ENCODE measurements at regions of chr14 and their contacts with region 1.

Region 1: GRCh38 chr14:22319526-22320361 is 269.3 kb downstream of the DAD1 start:
- DNase-seq: peak; percentile 63
- H3K4me3 ChIP-seq: no peak overlapping the region
- H3K27ac ChIP-seq: no peak overlapping the region
- H3K4me1 ChIP-seq: no peaks in the 10 kb centered on the region
- H3K27me3 ChIP-seq: no peaks in the 10 kb centered on the region
- CTCF ChIP-seq: peak; percentile 58 to 73 (median 64)
- POLR2A ChIP-seq: no peak

Region 2: GRCh38 chr14:21269252-21270046 is 1050.3 kb before region 1 on chr14 and contains the start of gene HNRNPC:
- intact Hi-C with region 1: no loop called
- DNase-seq: peak; percentile 100
- H3K4me3 ChIP-seq: peak within 1 kb of the TSS; percentile 83 to 95
- H3K27ac ChIP-seq: peak within 1 kb of the TSS; percentile 95 to 99
- H3K4me1 ChIP-seq: peaks cover 6% of the 10 kb centered on the region
- H3K27me3 ChIP-seq: no peaks in the 10 kb centered on the region
- CTCF ChIP-seq: no peak
- POLR2A ChIP-seq: peak; percentile 95
- total RNA-seq, gene HNRNPC: 411 to 423 TPM

Region 3: DNA sequence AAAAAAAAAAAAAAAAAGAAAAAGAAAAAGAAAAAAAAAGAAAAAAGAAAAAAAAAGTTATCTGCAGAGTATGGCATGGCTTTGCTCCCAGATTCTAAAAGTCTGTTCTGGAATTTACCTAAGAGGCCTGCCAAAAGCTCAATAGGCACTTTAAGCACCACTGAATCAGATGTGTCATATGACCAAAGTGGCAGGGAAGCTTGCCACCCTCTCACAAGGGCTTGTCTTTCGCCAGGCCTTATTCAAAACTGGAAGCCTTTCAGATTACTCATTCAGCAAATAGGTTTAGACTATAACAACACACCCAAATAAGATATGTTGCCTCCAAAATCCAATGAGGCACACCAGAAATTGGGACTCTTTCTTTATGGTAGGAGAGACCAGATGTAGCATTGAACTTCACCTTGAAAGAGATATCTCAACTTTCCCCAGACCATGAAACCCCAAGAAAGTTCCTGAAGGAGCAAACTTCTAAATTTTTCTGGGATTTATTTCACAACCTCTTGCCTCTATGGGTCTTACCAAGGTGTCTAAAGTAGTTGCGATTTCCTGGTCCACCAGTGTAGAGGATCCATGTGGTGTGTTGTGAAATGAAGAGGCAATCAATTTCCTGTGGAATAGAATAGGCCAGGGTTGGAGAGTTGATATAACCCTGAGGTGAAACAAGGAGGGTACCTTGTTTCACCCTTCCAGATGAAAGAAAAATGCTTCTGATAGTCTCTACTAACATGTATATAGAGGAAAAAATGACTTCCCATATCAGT is 50.5 kb after region 1 on chr14:
- intact Hi-C with region 1: loop called (anchors 5 kb)
- DNase-seq: peak; percentile 67
- H3K4me3 ChIP-seq: no peak overlapping the region
- H3K27ac ChIP-seq: peak overlapping the region in 1 of 2 donors; percentile 31
- H3K4me1 ChIP-seq: no peaks in the 10 kb centered on the region
- H3K27me3 ChIP-seq: no peaks in the 10 kb centered on the region
- CTCF ChIP-seq: no peak
- POLR2A ChIP-seq: no peak

Measured in prostate gland (tissue), 2 donors.